Mammary epithelial cell (primary cell): ENCODE measurements at regions of chr11 and their contacts with region 1.

Region 1: GRCh38 chr11:82775736-82776346 is 42.2 kb upstream of the FAM181B start:
- DNase-seq: peak; percentile 51
- H3K4me3 ChIP-seq: no peak overlapping the region
- H3K27ac ChIP-seq: no peak overlapping the region
- H3K4me1 ChIP-seq: peaks cover 15% of the 10 kb centered on the region
- H3K27me3 ChIP-seq: no peaks in the 10 kb centered on the region
- CTCF ChIP-seq: peak; percentile 79

Region 2: GRCh38 chr11:82663535-82663934 is 112.3 kb before region 1 on chr11:
- CTCF ChIA-PET with region 1: no interaction called
- dilution Hi-C with region 1: no loop called
- in situ Hi-C with region 1: no loop called
- intact Hi-C with region 1: no loop called
- DNase-seq: no peak
- H3K4me3 ChIP-seq: no peak overlapping the region
- H3K27ac ChIP-seq: no peak overlapping the region
- H3K4me1 ChIP-seq: no peaks in the 10 kb centered on the region
- H3K27me3 ChIP-seq: no peaks in the 10 kb centered on the region
- CTCF ChIP-seq: no peak

Region 3: DNA sequence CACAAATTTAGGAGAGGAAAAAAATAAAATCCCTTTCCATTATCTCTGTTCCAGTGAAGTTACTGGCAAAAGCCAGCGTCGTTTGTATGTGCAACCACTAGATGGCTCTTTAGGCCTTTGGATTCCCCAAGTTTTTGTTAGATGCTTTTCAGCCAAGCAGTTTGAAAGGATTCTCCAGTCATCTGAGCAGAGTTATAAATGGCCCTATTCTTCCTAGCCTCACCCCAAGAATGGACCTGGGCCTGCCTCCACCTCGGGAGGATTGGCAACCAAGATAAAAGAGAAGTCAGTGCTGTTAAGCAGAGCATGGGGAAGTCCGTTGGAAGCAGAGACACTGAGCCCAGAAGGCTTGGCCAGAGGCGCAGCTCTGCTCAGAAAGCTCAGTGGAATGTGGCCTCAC is 57.5 kb before region 1 on chr11:
- CTCF ChIA-PET with region 1: no interaction called
- dilution Hi-C with region 1: no loop called
- in situ Hi-C with region 1: no loop called
- intact Hi-C with region 1: loop called (anchors 2 kb)
- DNase-seq: peak; percentile 54
- H3K4me3 ChIP-seq: no peak overlapping the region
- H3K27ac ChIP-seq: no peak overlapping the region
- H3K4me1 ChIP-seq: peaks cover 4% of the 10 kb centered on the region
- H3K27me3 ChIP-seq: no peaks in the 10 kb centered on the region
- CTCF ChIP-seq: peak; percentile 76 to 80

Region 4: GRCh38 chr11:82733444-82734119 is 42.3 kb before region 1 on chr11 and contains the start of gene FAM181B:
- CTCF ChIA-PET with region 1: interaction called, 4 read pairs
- dilution Hi-C with region 1: no loop called
- in situ Hi-C with region 1: no loop called
- intact Hi-C with region 1: loop called (anchors 5 kb)
- DNase-seq: peak; percentile 32
- H3K4me3 ChIP-seq: peak within 1 kb of the TSS; percentile 54 to 68 (median 60)
- H3K27ac ChIP-seq: no peak within 1 kb of the TSS
- H3K4me1 ChIP-seq: peaks cover 11% of the 10 kb centered on the region
- H3K27me3 ChIP-seq: peaks cover 14% of the 10 kb centered on the region
- CTCF ChIP-seq: no peak
- total RNA-seq, gene FAM181B: 0.21 to 1.0 TPM

Region 5: DNA sequence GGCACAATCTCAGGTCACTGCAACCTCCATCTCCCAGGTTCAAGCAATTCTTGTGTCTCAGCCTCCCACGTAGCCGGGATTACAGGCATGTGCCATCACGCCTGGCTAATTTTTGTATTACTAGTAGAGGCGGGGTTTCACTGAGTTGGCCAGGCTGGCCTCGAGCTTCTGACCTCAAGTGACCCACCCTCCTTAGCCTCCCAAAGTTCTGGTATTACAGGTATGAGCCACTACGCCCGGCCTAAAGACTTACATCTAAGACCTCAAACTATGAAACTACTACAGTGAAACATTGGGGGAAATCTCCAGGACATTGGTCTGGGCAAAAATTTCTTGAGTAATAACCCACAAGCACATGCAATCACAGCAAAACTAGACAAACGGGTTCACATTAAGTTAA is 28.4 kb before region 1 on chr11:
- CTCF ChIA-PET with region 1: no interaction called
- dilution Hi-C with region 1: no loop called
- in situ Hi-C with region 1: no loop called
- intact Hi-C with region 1: loop called (anchors 2 kb)
- DNase-seq: peak; percentile 93
- H3K4me3 ChIP-seq: no peak overlapping the region
- H3K27ac ChIP-seq: peak overlapping the region; percentile 63
- H3K4me1 ChIP-seq: peaks cover 16% of the 10 kb centered on the region
- H3K27me3 ChIP-seq: no peaks in the 10 kb centered on the region
- CTCF ChIP-seq: no peak